Activated T-helper 1 cell treated with anti-CD3 and anti-CD28 coated beads, Interleukin-12 subunit alpha, Interleukin-12 subunit beta, Interleukin-2, Interleukin-4 antibody, amounts not matched to agents 30 ng/mL and 10 ng/mL and 1 ng/mL, durations not matched to agents 14 hours and 24 hours and 36 hours (primary cell): ENCODE measurements at regions of chr7 and their contacts with region 1.

Region 1: DNA sequence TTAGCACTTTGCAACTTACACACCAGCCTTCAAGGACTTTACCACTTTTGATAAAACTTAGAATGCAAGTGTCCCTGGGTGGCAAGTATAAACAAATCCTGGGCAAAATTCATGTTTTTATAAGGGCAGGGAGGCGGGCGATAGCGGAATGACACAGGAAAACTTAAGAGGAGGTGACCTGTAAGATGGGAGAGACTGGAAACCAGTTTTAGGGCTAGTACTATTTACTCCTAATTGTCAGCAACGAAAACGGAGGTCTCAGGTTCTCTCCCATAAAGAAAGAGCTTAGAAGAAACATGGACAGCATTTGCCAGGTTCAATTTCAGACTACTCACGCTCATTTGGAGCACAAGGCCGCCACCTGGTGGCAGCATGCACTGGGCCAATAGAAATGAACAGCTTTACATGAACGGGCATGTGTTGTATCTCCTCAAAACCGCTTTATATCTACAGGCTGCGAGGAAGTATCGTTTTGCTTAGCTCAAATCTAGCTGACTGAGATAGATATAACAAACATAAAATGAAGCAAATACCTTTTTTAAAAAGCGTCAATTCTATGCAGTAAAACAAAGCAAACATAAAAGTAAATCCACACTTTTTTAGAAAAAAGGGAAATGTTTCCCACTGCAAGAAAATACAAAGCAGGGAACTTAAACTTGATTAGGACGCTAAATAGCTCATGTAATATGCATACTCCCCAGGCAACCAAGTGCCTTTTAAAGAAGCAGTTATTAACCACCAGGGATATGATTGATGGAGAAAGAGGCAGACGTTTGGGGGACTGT is 37.6 kb upstream of the SVOPL start:
- DNase-seq: peak; percentile 72
- H3K4me3 Mint-ChIP-seq: no peak overlapping the region
- H3K27ac Mint-ChIP-seq: no peak overlapping the region
- H3K4me1 Mint-ChIP-seq: peaks cover 6% of the 10 kb centered on the region
- H3K27me3 Mint-ChIP-seq: no peaks in the 10 kb centered on the region

Region 2: GRCh38 chr7:137656227-137656849 is 1082.4 kb before region 1 on chr7:
- intact Hi-C with region 1: loop called (anchors 10 kb)
- DNase-seq: peak; percentile 35
- H3K4me3 Mint-ChIP-seq: no peak overlapping the region
- H3K27ac Mint-ChIP-seq: no peak overlapping the region
- H3K4me1 Mint-ChIP-seq: no peaks in the 10 kb centered on the region
- H3K27me3 Mint-ChIP-seq: peaks cover 2% of the 10 kb centered on the region

Region 3: GRCh38 chr7:138008547-138009349 is 730.0 kb before region 1 on chr7:
- intact Hi-C with region 1: loop called (anchors 2 kb)
- DNase-seq: peak; percentile 24
- H3K4me3 Mint-ChIP-seq: no peak overlapping the region
- H3K27ac Mint-ChIP-seq: no peak overlapping the region
- H3K4me1 Mint-ChIP-seq: peaks cover 6% of the 10 kb centered on the region
- H3K27me3 Mint-ChIP-seq: peaks cover 14% of the 10 kb centered on the region

Region 4: GRCh38 chr7:138097064-138097741 is 641.5 kb before region 1 on chr7:
- intact Hi-C with region 1: loop called (anchors 1 kb)
- DNase-seq: no peak
- H3K4me3 Mint-ChIP-seq: no peak overlapping the region
- H3K27ac Mint-ChIP-seq: no peak overlapping the region
- H3K4me1 Mint-ChIP-seq: no peaks in the 10 kb centered on the region
- H3K27me3 Mint-ChIP-seq: peaks cover 6% of the 10 kb centered on the region

Region 5: GRCh38 chr7:138161600-138162081 is 577.1 kb before region 1 on chr7:
- intact Hi-C with region 1: loop called (anchors 1 kb)
- DNase-seq: peak; percentile 61
- H3K4me3 Mint-ChIP-seq: no peak overlapping the region
- H3K27ac Mint-ChIP-seq: no peak overlapping the region
- H3K4me1 Mint-ChIP-seq: no peaks in the 10 kb centered on the region
- H3K27me3 Mint-ChIP-seq: peaks cover 7% of the 10 kb centered on the region

Region 6: GRCh38 chr7:138449580-138449979 is 289.2 kb before region 1 on chr7:
- intact Hi-C with region 1: loop called (anchors 1 kb)
- DNase-seq: no peak
- H3K4me3 Mint-ChIP-seq: no peak overlapping the region
- H3K27ac Mint-ChIP-seq: no peak overlapping the region
- H3K4me1 Mint-ChIP-seq: no peaks in the 10 kb centered on the region
- H3K27me3 Mint-ChIP-seq: peaks cover 5% of the 10 kb centered on the region

Region 7: GRCh38 chr7:138865843-138866242 is 127.1 kb after region 1 on chr7:
- intact Hi-C with region 1: loop called (anchors 1 kb)
- DNase-seq: peak; percentile 49
- H3K4me3 Mint-ChIP-seq: no peak overlapping the region
- H3K27ac Mint-ChIP-seq: no peak overlapping the region
- H3K4me1 Mint-ChIP-seq: peaks cover 24% of the 10 kb centered on the region
- H3K27me3 Mint-ChIP-seq: peaks cover 4% of the 10 kb centered on the region